GM13976 (cell line): ENCODE measurements at regions of chr11 and their contacts with region 1.

Region 1: DNA sequence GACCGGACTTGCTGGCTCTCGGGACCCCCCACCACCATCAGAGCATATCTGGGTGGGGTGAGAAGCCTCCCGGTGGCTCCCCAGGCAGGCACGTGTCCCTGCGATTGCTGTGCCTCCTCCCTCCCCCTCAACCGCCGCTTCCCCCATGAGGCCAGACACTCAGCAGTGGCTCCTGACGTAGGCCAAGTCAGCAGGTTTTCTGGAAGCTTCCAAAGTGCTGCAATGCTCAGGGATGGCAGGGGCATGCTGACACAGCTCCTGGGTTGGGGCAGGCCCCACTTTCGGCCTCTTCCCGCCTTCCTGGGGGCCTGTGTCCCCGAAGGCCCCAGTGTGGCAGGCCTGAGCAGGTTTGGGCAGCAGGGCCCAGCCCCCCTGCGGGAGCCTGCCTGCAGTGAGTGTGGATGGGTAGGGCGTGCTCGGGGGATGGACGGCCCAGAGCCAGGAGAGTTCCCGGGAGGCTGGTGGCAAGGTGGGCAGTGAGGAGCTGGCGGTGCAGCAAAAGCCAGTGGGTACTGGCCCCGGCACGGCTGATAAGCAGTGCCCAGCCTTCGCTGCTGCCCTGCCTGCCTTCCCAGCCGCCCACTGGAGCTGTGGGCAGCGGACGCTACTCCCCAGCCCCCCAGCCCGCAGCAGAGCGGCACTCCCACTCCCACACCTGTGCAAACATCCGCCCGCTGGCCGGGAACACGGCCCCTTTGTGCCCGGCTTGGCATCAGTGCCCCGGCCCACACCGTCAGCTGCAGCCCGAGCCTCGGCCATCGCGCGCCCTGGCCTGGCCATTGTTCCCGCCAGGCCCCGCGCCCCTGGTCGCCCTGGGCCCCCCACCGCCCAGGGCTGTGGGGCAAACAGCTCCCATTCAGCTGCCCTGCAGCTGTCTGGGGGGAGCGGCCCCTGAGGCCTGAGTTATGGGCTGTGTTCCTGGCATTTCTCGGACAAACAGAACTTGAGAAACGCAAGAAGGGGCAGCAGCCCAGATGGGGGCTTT is 125.0 kb downstream of the KCNQ1OT1 start:
- DNase-seq: no peak
- CTCF ChIP-seq: no peak

Region 2: GRCh38 chr11:2768471-2769408 is 193.9 kb after region 1 on chr11:
- in situ Hi-C with region 1: loop called (anchors 25 kb)
- DNase-seq: peak; percentile 11
- CTCF ChIP-seq: no peak

Region 3: DNA sequence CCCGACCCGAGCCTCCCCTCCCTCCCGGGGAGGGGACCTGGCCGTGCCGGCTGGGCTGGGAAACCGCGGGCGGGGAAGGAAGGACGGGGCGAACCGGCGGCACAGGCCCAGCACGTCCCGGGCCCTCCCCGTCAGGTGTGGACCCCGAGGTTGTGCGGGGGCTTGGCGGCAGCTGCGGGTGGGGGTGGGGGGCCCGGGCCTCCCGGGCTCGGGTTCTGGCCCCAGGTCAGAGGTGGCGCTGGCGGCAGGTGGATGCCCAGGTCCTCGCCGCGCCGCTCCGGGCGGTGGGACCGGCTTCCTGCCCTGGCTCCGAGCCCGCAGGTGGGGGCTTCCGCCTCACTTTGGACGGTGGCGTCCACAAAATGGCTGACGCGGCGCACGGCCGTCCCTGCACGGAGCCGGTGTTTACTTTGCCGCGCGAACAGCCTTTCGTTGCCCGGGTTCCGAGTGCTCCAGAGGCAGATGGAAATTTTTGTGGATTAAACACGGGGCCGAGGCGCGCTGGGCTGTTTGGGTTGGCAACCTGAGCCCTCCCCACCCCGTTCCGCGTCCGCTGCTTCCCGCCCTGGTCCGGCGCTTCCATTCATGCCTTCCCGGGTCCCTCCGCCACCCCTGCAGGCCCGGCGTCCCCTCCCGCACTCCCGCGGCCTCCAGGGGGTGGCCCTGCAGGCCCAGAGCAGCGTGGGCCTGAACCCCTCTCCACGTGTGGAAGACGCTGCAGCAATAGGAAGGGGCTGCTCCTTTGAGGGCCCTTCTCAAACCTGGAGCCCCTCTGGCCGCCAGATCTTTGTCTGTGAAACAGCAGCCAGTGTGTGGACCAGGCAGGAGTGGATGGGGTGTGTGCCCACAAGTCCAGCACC is 216.9 kb after region 1 on chr11:
- in situ Hi-C with region 1: no loop called
- DNase-seq: no peak
- CTCF ChIP-seq: no peak